Activated naive CD8-positive, alpha-beta T cell treated with anti-CD3 and anti-CD28 coated beads, Interleukin-2, amount 10 ng/mL, durations not matched to agents 7 days and 5 days (primary cell): ENCODE measurements at regions of chr14 and their contacts with region 1.

Region 1: GRCh38 chr14:73491256-73492042 is 716 bp downstream of the RIOX1 start:
- DNase-seq: peak; percentile 79
- ATAC-seq: peak; percentile 63
- H3K4me3 Mint-ChIP-seq: peak overlapping the region; percentile 86
- H3K27ac Mint-ChIP-seq: peak overlapping the region; percentile 71
- H3K4me1 Mint-ChIP-seq: peaks cover 26% of the 10 kb centered on the region
- H3K27me3 Mint-ChIP-seq: peaks cover 9% of the 10 kb centered on the region

Region 2: GRCh38 chr14:73458151-73458976 is 33.1 kb before region 1 on chr14 and contains the start of gene NUMB:
- POLR2A ChIA-PET with region 1: interaction called, 14 read pairs
- DNase-seq: peak; percentile 83
- ATAC-seq: peak; percentile 98
- H3K4me3 Mint-ChIP-seq: peak within 1 kb of the TSS; percentile 98
- H3K27ac Mint-ChIP-seq: peak within 1 kb of the TSS; percentile 97
- H3K4me1 Mint-ChIP-seq: peaks cover 35% of the 10 kb centered on the region
- H3K27me3 Mint-ChIP-seq: no peaks in the 10 kb centered on the region
- total RNA-seq, gene NUMB: 47.5 to 50.3 TPM

Region 3: DNA sequence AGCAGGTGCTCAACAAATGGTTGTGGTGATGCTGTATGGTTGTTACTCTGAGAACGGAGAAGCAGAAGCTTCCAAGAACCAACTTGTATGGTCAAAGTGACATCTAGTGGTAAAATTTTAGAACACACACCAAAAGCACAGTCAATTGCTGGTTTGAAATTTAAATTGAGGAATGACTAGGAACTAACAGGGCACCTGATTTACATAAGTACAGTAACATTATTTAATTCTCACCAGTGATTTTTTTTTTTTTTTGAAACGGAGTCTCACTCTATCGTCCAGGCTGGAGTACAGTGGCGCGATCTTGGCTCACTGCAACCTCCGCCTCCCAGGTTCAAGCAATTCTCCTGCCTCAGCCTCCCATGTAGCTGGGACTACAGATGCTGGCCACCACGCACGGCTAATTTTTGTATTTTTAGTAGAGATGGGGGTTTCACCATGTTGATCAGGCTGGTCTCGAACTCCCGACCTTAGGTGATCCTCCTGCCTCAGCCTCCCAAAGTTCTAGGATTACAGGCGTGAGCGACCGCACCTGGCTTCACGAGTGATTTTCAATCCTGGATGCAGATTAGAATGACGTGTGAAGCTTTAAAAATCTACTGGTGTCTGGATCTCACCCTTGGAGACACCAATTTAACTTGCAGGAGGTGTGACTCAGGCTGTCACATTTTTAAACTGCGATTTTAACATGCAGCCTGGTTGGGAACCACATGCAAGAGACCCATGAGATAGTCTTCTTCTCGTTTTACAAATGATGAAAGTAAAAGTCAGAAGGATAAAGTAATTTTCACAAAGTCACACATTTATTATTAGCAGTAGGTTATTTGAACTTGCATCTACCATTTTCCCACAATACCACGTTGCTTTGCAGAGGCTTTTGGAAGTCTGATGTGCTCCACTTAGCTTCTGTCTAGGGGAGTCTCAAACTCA is 19.0 kb before region 1 on chr14:
- POLR2A ChIA-PET with region 1: no interaction called
- DNase-seq: no peak
- ATAC-seq: peak; percentile 50
- H3K4me3 Mint-ChIP-seq: no peak overlapping the region
- H3K27ac Mint-ChIP-seq: no peak overlapping the region
- H3K4me1 Mint-ChIP-seq: peaks cover 9% of the 10 kb centered on the region
- H3K27me3 Mint-ChIP-seq: no peaks in the 10 kb centered on the region